Breast epithelium (tissue), 4 donors: ENCODE measurements at regions of chr14 and their contacts with region 1.

Region 1: DNA sequence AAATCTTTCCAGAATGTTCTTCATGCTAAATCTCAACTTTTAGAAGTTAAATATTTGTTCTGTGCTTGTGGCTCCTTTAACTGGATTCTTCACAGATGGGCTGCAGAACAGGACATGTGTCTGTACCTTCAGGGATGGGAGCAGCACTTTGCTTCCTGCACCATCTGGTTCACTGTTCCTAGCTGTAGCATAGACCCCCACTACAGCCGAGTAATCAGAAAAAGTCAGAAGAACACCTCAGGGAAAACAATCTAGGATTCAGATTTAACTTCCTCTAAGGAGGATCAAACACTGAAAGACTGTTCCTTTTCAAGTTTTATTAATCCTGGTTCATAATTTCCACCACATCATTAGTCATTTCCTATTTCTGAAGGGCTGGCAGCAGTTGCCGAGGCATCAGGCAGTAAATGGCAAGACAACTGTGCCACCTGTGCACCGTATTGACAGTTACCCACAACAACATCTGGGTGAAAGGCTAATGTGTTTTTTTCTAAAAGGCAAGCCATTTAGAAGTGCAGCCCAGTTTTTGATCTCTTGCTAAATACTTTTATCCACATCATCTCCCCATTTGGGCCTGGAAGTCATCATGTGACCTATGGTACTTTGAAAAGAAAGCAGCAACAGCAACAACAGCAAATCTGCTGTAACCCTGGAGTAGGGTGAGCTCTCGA is 212.8 kb upstream of the BMP4 start:
- DNase-seq: no peak
- H3K4me3 ChIP-seq: no peak overlapping the region
- H3K27ac ChIP-seq: peak overlapping the region in 1 of 2 donors; percentile 60
- H3K4me1 ChIP-seq: no peaks in the 10 kb centered on the region
- H3K27me3 ChIP-seq: no peaks in the 10 kb centered on the region
- CTCF ChIP-seq: no peak
- POLR2A ChIP-seq: no peak

Region 2: DNA sequence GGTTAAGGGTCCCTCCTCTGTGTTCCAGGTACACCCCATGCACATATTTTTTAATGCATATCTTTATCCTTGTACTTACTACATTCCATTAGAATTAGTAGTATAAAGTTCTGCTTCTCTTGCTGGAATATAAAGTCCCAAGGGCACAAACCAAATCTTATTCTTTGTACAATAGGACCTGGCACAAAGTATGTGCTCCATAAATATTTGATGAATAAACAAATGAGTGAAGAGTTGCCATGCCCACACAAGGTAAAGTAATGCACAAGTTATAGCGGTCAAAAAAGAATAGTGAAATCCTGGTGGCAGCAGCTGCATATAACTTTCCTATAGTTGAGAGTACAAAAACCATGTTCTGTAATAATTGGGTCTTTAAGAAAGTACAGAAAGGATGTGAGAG is 130.7 kb before region 1 on chr14:
- intact Hi-C with region 1: no loop called
- DNase-seq: no peak
- H3K4me3 ChIP-seq: no peak overlapping the region
- H3K27ac ChIP-seq: no peak overlapping the region
- H3K4me1 ChIP-seq: no peaks in the 10 kb centered on the region
- H3K27me3 ChIP-seq: no peaks in the 10 kb centered on the region
- CTCF ChIP-seq: no peak
- POLR2A ChIP-seq: no peak

Region 3: DNA sequence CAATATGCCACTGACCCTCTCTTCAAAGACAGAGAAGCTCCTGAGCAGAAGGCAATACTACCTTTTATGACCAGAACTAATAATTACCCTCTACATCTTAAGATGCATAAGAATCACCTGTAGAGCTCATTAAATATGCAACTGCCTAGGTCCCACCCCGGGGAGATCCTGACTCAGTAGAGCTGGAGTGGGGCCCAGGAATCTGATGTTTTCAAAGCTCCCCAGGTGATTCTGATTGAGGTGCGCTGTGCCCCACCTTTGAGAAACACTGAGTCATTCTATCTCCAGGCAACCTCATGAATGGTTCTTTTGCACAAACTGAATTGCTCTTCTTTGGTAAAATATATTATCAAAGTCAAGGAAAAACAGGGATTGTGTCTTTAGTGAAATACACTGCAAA is 63.5 kb before region 1 on chr14:
- intact Hi-C with region 1: no loop called
- DNase-seq: no peak
- H3K4me3 ChIP-seq: no peak overlapping the region
- H3K27ac ChIP-seq: no peak overlapping the region
- H3K4me1 ChIP-seq: no peaks in the 10 kb centered on the region
- H3K27me3 ChIP-seq: no peaks in the 10 kb centered on the region
- CTCF ChIP-seq: no peak
- POLR2A ChIP-seq: no peak

Region 4: DNA sequence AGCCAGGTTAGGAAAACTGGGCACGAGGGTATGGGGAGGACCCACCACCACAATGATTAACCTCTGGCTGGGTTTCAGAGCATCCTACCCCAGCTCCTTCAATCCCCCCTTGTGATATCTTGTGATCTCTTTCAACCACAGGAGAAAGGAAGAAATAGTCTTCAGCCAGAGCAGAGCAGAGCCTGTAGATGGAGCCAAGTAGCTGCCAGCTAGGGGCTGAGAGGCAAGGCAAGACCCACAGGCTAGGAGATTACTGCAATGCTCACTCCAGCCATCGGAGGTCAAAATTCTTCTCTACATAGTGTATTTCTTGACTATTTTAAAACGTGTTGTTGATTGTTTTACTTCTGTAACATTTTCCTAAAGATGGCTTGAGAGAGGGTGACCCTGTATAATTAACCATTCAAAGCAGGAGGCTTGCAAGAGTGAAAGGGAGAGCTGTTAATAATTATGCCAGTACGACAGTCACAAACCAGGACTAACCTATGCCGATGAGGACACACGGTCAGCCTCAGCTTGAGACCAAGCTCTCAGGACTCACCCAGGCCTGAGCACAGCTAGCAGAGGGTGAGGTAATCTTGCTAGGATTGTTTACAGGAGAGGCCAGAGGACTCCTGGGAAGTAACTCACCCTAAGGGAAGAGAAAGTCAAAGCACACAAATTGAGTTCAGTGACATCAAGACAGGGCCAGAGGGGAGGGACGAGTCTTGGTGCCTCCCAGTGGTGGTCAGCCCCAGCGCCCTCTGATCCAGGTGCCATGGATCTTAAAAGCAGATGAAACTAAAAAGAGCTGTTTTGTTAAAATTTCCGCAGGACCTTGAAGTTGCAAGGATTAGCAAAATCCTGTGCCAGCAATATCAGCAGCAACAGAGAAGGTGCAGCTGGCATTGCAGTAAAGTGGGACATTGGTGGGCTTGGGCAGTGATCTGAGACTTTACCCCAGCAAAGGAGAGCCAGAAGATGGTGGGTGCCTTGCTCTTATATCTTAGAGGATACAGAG is 197.6 kb after region 1 on chr14:
- intact Hi-C with region 1: loop called (anchors 10 kb)
- DNase-seq: peak in 1 of 2 donors; percentile 17
- H3K4me3 ChIP-seq: no peak overlapping the region
- H3K27ac ChIP-seq: peak overlapping the region; percentile 19 to 64
- H3K4me1 ChIP-seq: no peaks in the 10 kb centered on the region
- H3K27me3 ChIP-seq: no peaks in the 10 kb centered on the region
- CTCF ChIP-seq: peak in 2 of 3 donors; percentile 22 to 28
- POLR2A ChIP-seq: no peak